ENCODE measurements at regions of chr13 and their contacts with region 1.

Region 1: DNA sequence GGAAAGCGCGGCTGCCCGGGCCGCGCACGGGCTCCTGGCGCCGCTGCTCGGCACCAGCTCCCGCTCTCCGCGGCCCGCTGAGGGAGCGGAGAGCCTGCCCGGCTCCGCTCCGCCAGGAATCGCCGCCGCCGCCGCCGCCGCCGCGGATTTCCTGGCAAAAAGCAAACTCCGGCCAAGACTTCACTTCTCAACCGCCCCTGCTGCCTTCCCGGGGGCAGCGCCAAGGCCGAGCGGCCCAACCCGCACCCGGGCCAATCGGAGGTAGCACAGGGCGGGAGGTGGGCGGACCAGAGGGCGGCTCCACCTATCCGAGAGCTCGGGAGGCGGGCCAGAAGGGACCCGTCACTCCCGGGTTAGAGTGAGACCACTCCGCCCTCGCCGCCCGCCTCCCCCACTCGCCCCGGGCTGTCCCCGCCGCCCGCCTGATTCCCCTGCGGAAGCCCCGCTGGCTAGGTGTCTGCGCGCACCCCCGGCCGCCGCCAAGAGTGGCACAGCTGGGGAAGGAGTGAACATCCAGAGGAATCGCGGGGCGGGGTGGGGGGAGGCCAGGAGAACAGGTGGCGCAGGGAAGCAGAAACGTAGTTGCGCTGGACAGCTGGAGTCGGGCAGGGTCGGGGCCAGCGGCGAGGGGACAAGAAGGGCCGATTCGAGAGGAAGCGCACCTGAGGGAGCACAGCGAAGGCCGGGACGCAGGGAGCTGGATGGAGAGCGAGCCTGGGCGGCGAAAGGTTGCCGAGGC is at the start of gene LNX2:
- DNase-seq: peak; percentile 98
- H3K4me3 Mint-ChIP-seq: peak within 1 kb of the TSS; percentile 92
- H3K27ac Mint-ChIP-seq: peak within 1 kb of the TSS; percentile 88
- H3K4me1 Mint-ChIP-seq: peaks cover 54% of the 10 kb centered on the region
- H3K27me3 Mint-ChIP-seq: no peaks in the 10 kb centered on the region
- total RNA-seq, gene LNX2: 5.0 to 5.4 TPM

Region 2: DNA sequence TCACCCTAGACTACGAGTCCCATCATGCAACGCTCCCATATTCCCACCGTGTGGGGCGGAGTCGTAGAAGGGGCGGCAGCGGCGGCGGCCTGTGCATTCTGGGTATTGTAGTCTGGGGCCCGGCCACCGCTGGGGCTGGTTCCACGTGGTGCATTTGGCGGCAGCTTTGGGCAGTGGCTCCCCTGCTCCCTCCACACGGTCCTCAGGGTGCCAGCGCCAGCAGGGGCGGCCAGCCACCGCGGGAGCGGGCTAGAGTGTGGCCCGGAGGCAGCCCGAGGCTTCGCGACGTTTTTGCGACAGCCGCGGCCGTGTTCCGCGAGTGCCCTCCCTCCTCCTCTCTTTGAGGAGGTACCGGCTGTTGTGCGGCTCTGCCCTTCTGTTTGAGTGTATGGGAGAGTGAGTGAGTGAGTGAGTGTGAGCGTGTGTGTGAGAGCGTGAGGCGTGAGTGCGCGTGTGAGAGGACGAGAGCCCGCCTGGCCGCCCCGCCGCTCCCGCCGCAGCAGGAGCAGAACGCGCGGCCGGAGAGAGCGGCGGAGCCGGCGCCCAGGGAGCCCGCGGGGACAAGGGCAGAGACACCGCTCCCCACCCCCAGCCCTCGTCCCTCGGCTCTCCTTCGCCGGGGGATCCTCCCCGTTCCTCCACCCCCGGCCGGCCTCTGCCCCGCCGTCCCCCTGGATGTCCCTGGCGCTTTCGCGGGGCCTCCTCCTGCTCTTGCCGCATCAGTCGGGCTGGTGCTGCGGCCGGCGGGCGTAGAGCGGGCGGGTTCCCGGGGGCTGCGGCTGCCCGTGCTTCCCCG is 1366.6 kb before region 1 on chr13 and contains the start of gene CDK8:
- CTCF ChIA-PET with region 1: no interaction called
- POLR2A ChIA-PET with region 1: no interaction called
- intact Hi-C with region 1: loop called (anchors 10 kb)
- DNase-seq: peak; percentile 91
- H3K4me3 Mint-ChIP-seq: peak within 1 kb of the TSS; percentile 84
- H3K27ac Mint-ChIP-seq: peak within 1 kb of the TSS; percentile 67
- H3K4me1 Mint-ChIP-seq: peaks cover 37% of the 10 kb centered on the region
- H3K27me3 Mint-ChIP-seq: no peaks in the 10 kb centered on the region
- total RNA-seq, gene CDK8: 14.6 to 15.0 TPM

Region 3: GRCh38 chr13:27449936-27450828 is 170.4 kb before region 1 on chr13 and contains the start of gene MTIF3:
- CTCF ChIA-PET with region 1: interaction called, 3 read pairs
- POLR2A ChIA-PET with region 1: interaction called, 11 read pairs
- intact Hi-C with region 1: loop called (anchors 1 kb)
- DNase-seq: peak; percentile 97
- H3K4me3 Mint-ChIP-seq: peak within 1 kb of the TSS; percentile 90
- H3K27ac Mint-ChIP-seq: peak within 1 kb of the TSS; percentile 95
- H3K4me1 Mint-ChIP-seq: peaks cover 57% of the 10 kb centered on the region
- H3K27me3 Mint-ChIP-seq: no peaks in the 10 kb centered on the region
- total RNA-seq, gene MTIF3: 35.7 to 37.3 TPM

Region 4: GRCh38 chr13:27593267-27593666 is 27.3 kb before region 1 on chr13:
- CTCF ChIA-PET with region 1: interaction called, 3 read pairs
- POLR2A ChIA-PET with region 1: no interaction called
- intact Hi-C with region 1: loop called (anchors 2 kb)
- DNase-seq: no peak
- H3K4me3 Mint-ChIP-seq: no peak overlapping the region
- H3K27ac Mint-ChIP-seq: no peak overlapping the region
- H3K4me1 Mint-ChIP-seq: no peaks in the 10 kb centered on the region
- H3K27me3 Mint-ChIP-seq: no peaks in the 10 kb centered on the region

Region 5: DNA sequence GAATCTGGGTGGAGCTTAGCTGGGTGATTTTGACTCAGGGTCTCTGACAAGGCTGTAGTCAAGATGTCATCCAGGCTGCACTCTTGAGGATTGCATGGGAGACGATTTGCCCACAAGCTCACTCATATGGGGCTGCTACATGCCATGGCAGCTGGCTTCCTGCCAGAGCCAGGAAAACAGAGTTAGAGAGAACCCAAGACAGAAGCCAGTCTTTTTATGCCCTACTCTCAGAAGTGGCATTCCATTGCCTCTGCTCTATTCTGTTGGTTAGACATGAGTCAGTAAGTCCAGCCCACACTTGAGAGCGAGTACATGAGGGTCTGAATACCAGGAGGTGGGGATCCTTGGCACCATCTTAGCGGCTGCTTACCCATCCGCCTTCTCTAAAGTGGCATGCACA is 10.6 kb after region 1 on chr13:
- CTCF ChIA-PET with region 1: interaction called, 3 read pairs
- POLR2A ChIA-PET with region 1: interaction called, 4 read pairs
- intact Hi-C with region 1: loop called (anchors 1 kb)
- DNase-seq: no peak
- H3K4me3 Mint-ChIP-seq: no peak overlapping the region
- H3K27ac Mint-ChIP-seq: no peak overlapping the region
- H3K4me1 Mint-ChIP-seq: peaks cover 54% of the 10 kb centered on the region
- H3K27me3 Mint-ChIP-seq: no peaks in the 10 kb centered on the region

Measured in activated CD4-positive, alpha-beta memory T cell treated with anti-CD3 and anti-CD28 coated beads for 36 hours (primary cell).